ENCODE measurements at regions of chr21 and their contacts with region 1.

Region 1: DNA sequence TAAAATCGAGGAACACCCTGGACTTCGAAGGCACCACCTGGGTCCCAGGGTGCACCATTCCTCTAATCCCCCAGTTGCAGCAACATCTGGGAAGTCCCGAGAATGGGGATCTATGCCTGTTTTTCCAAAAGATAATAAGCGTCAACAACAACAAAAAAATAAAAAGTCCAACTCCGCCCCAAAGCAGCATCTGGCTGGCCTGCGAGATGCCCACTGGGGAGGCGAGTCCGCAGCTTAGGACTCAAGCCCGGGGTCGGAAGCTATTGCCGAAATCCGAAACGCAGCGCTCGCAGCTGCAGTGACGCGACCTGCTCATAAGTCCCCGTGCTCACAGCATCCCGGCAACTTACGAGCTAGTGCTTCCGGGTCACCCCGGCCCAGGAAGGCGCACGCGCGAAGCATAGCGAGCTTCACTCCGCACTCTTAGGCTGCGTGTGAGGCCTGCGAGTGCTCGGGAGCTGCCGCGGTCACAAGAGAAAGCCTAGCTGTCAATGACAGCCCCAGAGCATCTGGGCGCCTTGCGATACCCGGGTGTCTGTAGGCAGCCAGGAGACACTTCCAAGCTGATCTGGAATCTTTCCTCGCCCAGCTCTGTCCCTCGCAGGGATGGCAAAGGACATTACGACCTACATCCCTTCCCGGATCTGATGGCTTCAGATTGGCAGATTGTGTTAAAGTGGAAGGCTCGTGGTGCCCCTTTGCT is 9.9 kb upstream of the LTN1 start:
- DNase-seq: peak; percentile 97
- H3K4me3 ChIP-seq: peak overlapping the region; percentile 50 to 89 (median 64)
- H3K27ac ChIP-seq: peak overlapping the region; percentile 86
- H3K4me1 ChIP-seq: peaks cover 8% of the 10 kb centered on the region
- H3K27me3 ChIP-seq: no peaks in the 10 kb centered on the region
- CTCF ChIP-seq: no peak
- POLR2A ChIP-seq: peak; percentile 99

Region 2: GRCh38 chr21:28884976-28885852 is 117.4 kb before region 1 on chr21:
- CTCF ChIA-PET with region 1: no interaction called
- POLR2A ChIA-PET with region 1: interaction called, 7 read pairs
- dilution Hi-C with region 1: no loop called
- intact Hi-C with region 1: loop called (anchors 1 kb)
- DNase-seq: peak; percentile 93
- H3K4me3 ChIP-seq: peak overlapping the region; percentile 42 to 84 (median 55)
- H3K27ac ChIP-seq: peak overlapping the region; percentile 48
- H3K4me1 ChIP-seq: peaks cover 6% of the 10 kb centered on the region
- H3K27me3 ChIP-seq: peaks cover 0 to 9% of the 10 kb centered on the region in 2 experiments
- CTCF ChIP-seq: no peak
- POLR2A ChIP-seq: peak; percentile 86